ENCODE measurements at regions of chr18 and their contacts with region 1.

Region 1: DNA sequence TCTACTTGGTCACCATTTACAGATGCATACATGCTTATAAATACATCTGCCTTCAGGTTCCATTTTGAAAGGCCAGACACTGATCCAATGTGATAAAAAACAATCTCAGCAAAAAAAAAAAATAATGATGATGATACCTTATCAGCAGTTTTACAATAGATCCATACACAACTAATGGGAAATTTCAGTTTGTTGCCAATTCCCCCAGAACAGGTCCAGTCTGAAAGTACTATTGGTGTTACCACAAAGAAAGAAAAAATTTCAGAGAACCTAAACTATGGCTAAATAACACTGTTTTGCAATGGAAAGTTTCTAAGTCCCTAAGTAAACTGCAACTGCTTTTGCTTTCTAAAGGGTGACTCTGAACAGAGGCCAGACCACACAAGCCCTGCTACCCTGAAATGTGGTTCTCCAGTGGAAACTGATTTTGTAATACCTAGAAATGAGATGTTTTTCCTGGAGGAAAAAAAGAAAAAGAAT is 54.1 kb downstream of the LPIN2 start:
- DNase-seq: peak; percentile 63
- ATAC-seq: no peak
- H3K4me3 Mint-ChIP-seq: peak overlapping the region; percentile 71
- H3K27ac Mint-ChIP-seq: peak overlapping the region; percentile 100
- H3K4me1 Mint-ChIP-seq: peaks cover 90% of the 10 kb centered on the region
- H3K27me3 Mint-ChIP-seq: no peaks in the 10 kb centered on the region

Region 2: GRCh38 chr18:2641638-2642037 is 317.2 kb before region 1 on chr18:
- CTCF ChIA-PET with region 1: no interaction called
- POLR2A ChIA-PET with region 1: no interaction called
- intact Hi-C with region 1: loop called in 1 of 2 experiments (anchors 5 kb)
- DNase-seq: no peak
- ATAC-seq: peak; percentile 71
- H3K4me3 Mint-ChIP-seq: peak overlapping the region; percentile 63
- H3K27ac Mint-ChIP-seq: no peak overlapping the region
- H3K4me1 Mint-ChIP-seq: peaks cover 51% of the 10 kb centered on the region
- H3K27me3 Mint-ChIP-seq: no peaks in the 10 kb centered on the region

Region 3: DNA sequence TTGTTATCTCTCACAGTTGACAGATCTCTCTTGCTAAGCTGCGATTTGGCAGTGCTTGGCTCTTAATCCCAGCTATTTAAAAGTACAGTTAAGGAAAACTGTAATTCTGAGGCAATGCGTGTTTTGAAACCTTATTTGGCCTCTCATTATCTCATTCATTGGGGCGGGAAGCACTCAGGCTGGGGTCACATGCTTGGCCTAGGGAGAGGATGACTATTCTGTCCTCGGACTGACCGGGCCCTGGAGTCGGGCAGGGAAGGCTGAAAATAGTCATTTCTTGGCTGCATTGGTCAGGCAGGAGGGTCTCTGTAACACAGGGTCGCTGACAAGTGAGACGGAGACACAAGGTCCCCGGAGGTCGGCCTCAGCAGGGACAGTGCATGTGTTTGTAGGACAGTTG is 132.3 kb before region 1 on chr18:
- CTCF ChIA-PET with region 1: no interaction called
- POLR2A ChIA-PET with region 1: no interaction called
- intact Hi-C with region 1: no loop called
- DNase-seq: no peak
- ATAC-seq: no peak
- H3K4me3 Mint-ChIP-seq: no peak overlapping the region
- H3K27ac Mint-ChIP-seq: no peak overlapping the region
- H3K4me1 Mint-ChIP-seq: no peaks in the 10 kb centered on the region
- H3K27me3 Mint-ChIP-seq: no peaks in the 10 kb centered on the region

Region 4: DNA sequence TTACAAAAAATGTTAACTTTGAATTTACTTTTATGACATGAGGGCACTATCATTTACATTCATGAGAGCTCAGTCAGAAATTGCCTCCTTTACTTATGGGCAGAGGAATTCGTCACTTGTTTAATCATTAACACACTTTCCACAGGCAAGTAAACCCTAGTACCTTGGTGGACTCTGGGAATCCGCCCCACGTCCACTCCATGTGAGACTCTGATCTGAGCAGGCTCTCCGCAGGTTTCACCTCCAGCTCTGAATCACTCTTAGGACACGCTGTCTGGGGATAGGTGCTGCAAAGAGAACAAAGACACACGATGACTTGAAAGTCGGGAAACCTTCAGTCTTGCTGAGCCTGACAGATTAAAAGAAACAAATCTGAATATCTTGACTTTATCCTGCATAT is 19.5 kb before region 1 on chr18:
- CTCF ChIA-PET with region 1: interaction called, 12 read pairs
- POLR2A ChIA-PET with region 1: interaction called, 3 read pairs
- intact Hi-C with region 1: loop called in 1 of 2 experiments (anchors 1 kb)
- DNase-seq: no peak
- ATAC-seq: no peak
- H3K4me3 Mint-ChIP-seq: no peak overlapping the region
- H3K27ac Mint-ChIP-seq: peak overlapping the region; percentile 45
- H3K4me1 Mint-ChIP-seq: peaks cover 54% of the 10 kb centered on the region
- H3K27me3 Mint-ChIP-seq: no peaks in the 10 kb centered on the region

Region 5: DNA sequence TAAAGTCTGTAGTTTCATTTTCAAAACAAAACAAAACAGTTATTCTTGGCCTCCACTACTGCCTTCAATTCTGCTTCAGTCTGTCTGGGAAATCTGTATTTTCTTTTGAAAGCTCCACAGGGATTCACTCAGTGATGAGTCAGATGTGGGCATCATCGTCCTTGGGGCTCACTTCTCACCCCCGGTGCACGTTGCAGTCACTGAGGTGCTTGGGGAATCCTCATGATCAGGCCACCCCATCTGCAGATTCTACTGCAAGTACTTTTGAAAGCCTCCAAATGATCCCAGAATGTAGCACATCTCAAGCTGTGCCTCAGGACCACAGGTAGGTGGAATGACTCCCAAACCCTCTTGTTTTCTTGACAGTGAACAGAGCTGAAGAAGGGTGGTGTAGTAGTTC is 19.8 kb after region 1 on chr18:
- CTCF ChIA-PET with region 1: interaction called, 158 read pairs
- POLR2A ChIA-PET with region 1: interaction called, 40 read pairs
- intact Hi-C with region 1: loop called (anchors 1 kb)
- DNase-seq: peak; percentile 72
- ATAC-seq: peak; percentile 27
- H3K4me3 Mint-ChIP-seq: peak overlapping the region; percentile 74
- H3K27ac Mint-ChIP-seq: peak overlapping the region; percentile 98
- H3K4me1 Mint-ChIP-seq: peaks cover 83% of the 10 kb centered on the region
- H3K27me3 Mint-ChIP-seq: no peaks in the 10 kb centered on the region

Region 6: DNA sequence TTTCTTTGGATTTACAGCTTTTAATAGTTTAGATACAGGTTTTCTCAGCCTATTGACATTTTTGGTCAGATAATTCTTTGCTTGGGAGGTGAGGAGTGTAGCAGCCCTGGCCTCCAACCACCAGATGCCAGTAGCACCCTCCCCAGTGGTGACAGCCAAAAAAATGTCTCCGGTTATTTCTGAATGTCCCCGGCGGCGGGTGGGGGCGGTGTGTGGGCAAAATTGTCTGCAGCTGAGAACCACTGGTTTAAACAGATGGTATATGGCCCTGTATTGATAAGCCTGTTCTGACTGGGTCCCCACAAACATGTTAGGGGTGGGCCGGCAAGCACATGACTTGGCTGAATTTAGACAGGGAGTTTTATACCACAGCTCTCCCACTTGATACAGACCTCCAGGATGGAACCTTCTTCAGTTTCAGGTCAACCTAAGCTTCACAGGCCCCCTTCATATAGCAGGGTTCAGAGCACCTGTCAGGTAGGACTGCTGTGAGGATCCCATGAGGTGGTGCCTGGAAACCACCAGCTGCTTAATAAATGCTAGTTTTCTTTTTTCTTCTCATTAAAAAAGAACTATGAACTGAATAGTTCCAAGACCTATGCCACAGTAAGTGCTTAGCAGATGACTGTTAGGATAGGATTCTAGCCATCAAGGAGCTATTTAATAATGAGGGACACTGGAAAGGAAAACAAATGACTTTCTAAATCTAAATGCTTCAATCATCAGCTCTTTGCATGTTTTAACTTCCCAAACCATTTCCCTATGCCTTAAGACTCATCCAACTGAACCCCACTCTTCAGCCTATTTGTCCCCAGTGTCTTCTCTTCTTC is 36.0 kb after region 1 on chr18:
- CTCF ChIA-PET with region 1: interaction called, 158 read pairs
- POLR2A ChIA-PET with region 1: interaction called, 9 read pairs
- intact Hi-C with region 1: loop called (anchors 1 to 5 kb)
- DNase-seq: peak; percentile 85
- ATAC-seq: peak; percentile 38
- H3K4me3 Mint-ChIP-seq: no peak overlapping the region
- H3K27ac Mint-ChIP-seq: peak overlapping the region; percentile 80
- H3K4me1 Mint-ChIP-seq: peaks cover 90% of the 10 kb centered on the region
- H3K27me3 Mint-ChIP-seq: no peaks in the 10 kb centered on the region

Region 7: GRCh38 chr18:3472681-3473544 is 514.1 kb after region 1 on chr18:
- CTCF ChIA-PET with region 1: no interaction called
- POLR2A ChIA-PET with region 1: no interaction called
- intact Hi-C with region 1: no loop called
- DNase-seq: peak; percentile 23
- ATAC-seq: peak; percentile 89
- H3K4me3 Mint-ChIP-seq: no peak overlapping the region
- H3K27ac Mint-ChIP-seq: no peak overlapping the region
- H3K4me1 Mint-ChIP-seq: peaks cover 12% of the 10 kb centered on the region
- H3K27me3 Mint-ChIP-seq: peaks cover 2% of the 10 kb centered on the region

Region 8: DNA sequence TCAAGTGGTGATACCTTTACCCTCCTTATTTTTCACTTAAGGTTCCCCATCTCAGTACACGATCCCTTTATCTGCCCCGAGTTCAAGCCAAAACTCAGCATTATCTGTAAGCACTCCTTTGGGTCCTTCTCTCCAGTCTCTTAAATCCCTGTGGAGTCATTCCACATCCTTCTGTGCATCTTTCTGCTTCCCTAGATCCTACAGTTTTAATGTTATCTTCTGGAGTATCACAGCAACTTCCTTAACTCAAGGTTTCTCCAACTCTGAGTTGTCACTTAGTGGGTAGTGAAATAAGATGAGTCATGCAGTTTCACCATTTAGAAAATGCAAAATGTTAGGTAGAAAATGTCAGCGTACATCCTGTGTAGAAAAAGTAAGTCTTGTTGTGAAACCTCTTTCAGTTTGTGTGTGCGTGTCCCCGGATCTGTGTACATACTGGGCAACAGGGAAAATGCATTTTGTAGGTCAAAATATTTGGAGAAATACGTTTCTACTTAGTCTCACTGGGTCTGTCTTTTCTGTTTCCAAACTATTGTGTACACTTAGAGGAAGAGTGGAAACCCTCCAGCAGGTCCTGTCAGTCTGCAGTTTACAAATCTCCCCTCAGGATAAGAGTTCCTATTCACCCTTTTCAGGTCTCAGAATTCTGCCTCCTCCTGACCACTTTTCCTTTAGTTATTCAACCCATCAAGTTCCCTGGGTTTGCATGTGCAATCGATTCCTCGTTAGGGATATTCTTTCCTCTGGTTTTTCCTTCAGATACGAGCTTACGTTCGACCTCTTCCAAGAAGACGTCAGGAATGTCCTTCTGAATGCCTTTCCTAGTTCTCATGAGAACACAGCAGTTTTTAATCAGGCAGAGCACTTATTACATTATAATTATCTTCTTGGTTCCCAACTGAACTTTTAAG is 645.9 kb after region 1 on chr18:
- CTCF ChIA-PET with region 1: no interaction called
- POLR2A ChIA-PET with region 1: no interaction called
- intact Hi-C with region 1: loop called in 1 of 2 experiments (anchors 2 kb)
- DNase-seq: peak; percentile 59
- ATAC-seq: peak; percentile 69
- H3K4me3 Mint-ChIP-seq: no peak overlapping the region
- H3K27ac Mint-ChIP-seq: no peak overlapping the region
- H3K4me1 Mint-ChIP-seq: peaks cover 11% of the 10 kb centered on the region
- H3K27me3 Mint-ChIP-seq: no peaks in the 10 kb centered on the region